Aorta (tissue), 5 donors: ENCODE measurements at regions of chr7 and their contacts with region 1.

Region 1: DNA sequence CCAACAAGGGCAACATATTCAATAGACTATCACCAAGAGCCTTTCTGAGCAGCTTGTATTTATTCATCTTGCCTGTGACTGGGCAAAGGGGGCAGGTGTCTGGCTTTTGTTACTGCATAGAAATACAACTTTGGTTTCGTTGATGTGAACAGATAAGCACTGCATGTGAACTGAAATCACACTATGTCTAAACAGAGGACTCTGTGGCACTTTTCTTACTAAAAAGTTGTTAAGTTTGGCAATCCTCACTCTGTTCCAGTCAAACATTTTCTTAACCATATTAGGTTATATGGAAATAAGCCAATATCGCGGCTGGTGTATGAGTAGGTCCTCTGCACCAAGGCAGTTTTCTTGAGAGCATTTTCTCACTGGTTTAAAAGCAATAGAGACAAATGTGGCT is 48.5 kb downstream of the CALD1 start:
- DNase-seq: no peak
- ATAC-seq: peak; percentile 78
- H3K4me3 ChIP-seq: no peak overlapping the region
- H3K27ac ChIP-seq: peak overlapping the region; percentile 82 to 98
- H3K4me1 ChIP-seq: peaks cover 10% of the 10 kb centered on the region in 2 donors
- H3K27me3 ChIP-seq: no peaks in the 10 kb centered on the region

Region 2: DNA sequence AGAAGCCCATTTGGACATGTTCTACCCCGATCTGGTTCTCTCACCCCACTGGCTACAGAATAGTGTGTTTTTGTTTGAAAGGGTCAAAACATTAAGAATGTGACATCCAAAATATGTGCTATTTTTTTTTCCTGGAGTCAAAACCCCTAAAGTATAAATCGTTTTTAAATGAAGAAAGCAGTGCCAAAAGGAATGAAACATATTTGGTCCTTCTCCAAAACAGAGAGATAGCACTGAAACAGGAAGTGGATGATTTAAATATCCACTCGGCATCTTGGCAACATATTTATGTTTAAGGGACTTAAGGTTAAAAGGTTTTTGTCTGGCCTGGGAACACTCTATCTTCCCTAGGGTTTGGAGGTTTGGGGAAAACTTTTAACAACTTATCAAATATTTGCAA is 16.1 kb before region 1 on chr7:
- intact Hi-C with region 1: loop called in 1 of 2 experiments (anchors 2 kb)
- DNase-seq: no peak
- ATAC-seq: no peak
- H3K4me3 ChIP-seq: no peak overlapping the region
- H3K27ac ChIP-seq: peak overlapping the region in 1 of 2 donors; percentile 82
- H3K4me1 ChIP-seq: peaks cover 12 to 21% of the 10 kb centered on the region in 2 donors
- H3K27me3 ChIP-seq: no peaks in the 10 kb centered on the region

Region 3: GRCh38 chr7:135434047-135434446 is 606.2 kb after region 1 on chr7:
- intact Hi-C with region 1: no loop called
- DNase-seq: no peak
- ATAC-seq: no peak
- H3K4me3 ChIP-seq: no peak overlapping the region
- H3K27ac ChIP-seq: no peak overlapping the region
- H3K4me1 ChIP-seq: no peaks in the 10 kb centered on the region
- H3K27me3 ChIP-seq: no peaks in the 10 kb centered on the region